ENCODE measurements at regions of chr18 and their contacts with region 1.

Region 1: DNA sequence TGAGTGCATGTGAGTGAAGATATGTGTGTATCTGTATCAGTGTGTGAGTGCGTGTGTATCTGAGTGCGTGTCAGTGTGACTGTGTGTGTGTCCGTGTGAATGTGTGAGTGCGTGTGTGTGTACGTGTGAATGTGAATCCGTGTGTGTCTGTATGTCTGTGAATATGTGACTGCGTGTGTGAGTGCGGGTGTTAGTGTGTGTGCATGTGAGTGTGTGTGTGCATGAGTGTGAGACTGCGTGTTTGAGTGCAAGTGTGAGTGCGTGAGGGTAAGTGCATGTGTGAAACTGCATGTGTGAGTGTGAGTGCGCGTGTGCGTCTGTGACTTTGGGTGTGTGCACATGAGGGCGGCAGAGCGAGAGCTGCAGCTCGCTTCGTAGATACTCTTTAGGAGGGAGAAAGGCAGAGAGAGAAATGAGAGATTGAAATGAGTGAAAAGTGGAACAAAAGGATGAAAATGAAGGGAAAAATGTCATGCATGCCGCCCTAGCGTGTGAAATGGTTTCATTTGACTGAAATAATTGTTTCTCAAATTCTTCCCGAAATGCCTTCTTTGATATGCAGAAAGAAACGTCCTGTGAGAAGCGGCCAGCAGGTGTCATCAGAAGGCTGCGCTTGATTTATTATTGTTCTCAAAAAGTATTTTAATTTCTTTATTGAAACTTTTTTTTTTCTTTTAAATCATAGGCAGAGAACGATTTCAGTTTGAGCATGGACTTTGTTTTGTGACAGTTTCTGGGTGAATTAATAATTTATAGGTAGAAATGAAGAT is 25.6 kb downstream of the ZNF407 start:
- DNase-seq: peak in 7 of 9 donors; percentile 16 to 62 (median 48)
- ATAC-seq: peak; percentile 52
- H3K4me3 ChIP-seq: no peak overlapping the region
- H3K4me3 Mint-ChIP-seq: no peak overlapping the region
- H3K27ac ChIP-seq: no peak overlapping the region
- H3K27ac Mint-ChIP-seq: no peak overlapping the region
- H3K4me1 ChIP-seq: peaks cover 3 to 9% of the 10 kb centered on the region in 2 donors
- H3K4me1 Mint-ChIP-seq: peaks cover 6 to 28% (median 13%) of the 10 kb centered on the region in 7 donors
- H3K27me3 ChIP-seq: no peaks in the 10 kb centered on the region
- H3K27me3 Mint-ChIP-seq: no peaks in the 10 kb centered on the region

Region 2: DNA sequence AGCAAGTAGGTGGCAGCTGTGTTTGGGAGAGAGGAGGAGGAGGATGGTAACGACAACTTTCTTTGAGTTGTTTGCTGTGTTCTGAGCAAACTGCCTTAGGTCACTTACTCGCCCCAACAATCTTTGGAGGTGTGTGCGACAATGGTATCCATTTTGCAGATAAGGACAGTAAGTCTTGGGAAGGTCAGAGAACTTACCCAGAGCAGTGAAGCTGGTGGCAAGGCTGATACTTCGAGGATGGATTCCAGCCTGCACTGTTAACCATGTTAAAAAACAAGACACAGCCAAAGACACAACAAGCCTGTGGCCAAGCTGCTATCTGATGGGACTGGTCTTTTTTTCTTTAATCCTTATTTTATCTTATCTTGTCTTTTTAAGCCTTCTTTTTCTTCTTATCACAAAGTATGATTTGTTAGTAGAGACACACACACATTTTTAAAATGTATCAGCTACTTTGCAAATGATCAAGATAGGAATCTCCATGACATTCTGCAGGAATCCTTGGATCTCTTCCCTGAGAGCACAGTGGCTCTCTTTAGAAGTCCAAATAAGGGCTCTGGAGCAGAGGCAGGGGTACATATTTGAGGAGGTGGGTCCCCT is 61.0 kb before region 1 on chr18:
- CTCF ChIA-PET with region 1: no interaction called
- POLR2A ChIA-PET with region 1: no interaction called
- intact Hi-C with region 1: no loop called
- DNase-seq: no peak
- ATAC-seq: no peak
- H3K4me3 ChIP-seq: no peak overlapping the region
- H3K4me3 Mint-ChIP-seq: no peak overlapping the region
- H3K27ac ChIP-seq: no peak overlapping the region
- H3K27ac Mint-ChIP-seq: peak overlapping the region in 1 of 9 donors; percentile 64
- H3K4me1 ChIP-seq: no peaks in the 10 kb centered on the region
- H3K4me1 Mint-ChIP-seq: no peaks in the 10 kb centered on the region
- H3K27me3 ChIP-seq: no peaks in the 10 kb centered on the region
- H3K27me3 Mint-ChIP-seq: peaks cover 0 to 12% (median 9%) of the 10 kb centered on the region in 5 donors

Region 3: GRCh38 chr18:74963820-74964446 is 340.7 kb after region 1 on chr18:
- CTCF ChIA-PET with region 1: interaction called, 3 read pairs
- POLR2A ChIA-PET with region 1: no interaction called
- intact Hi-C with region 1: loop called in 1 of 2 experiments (anchors 5 kb)
- DNase-seq: no peak
- ATAC-seq: peak; percentile 59
- H3K4me3 ChIP-seq: no peak overlapping the region
- H3K4me3 Mint-ChIP-seq: no peak overlapping the region
- H3K27ac ChIP-seq: no peak overlapping the region
- H3K27ac Mint-ChIP-seq: no peak overlapping the region
- H3K4me1 ChIP-seq: no peaks in the 10 kb centered on the region
- H3K4me1 Mint-ChIP-seq: peaks cover 0 to 8% (median 0%) of the 10 kb centered on the region in 7 donors
- H3K27me3 ChIP-seq: no peaks in the 10 kb centered on the region
- H3K27me3 Mint-ChIP-seq: no peaks in the 10 kb centered on the region

Region 4: DNA sequence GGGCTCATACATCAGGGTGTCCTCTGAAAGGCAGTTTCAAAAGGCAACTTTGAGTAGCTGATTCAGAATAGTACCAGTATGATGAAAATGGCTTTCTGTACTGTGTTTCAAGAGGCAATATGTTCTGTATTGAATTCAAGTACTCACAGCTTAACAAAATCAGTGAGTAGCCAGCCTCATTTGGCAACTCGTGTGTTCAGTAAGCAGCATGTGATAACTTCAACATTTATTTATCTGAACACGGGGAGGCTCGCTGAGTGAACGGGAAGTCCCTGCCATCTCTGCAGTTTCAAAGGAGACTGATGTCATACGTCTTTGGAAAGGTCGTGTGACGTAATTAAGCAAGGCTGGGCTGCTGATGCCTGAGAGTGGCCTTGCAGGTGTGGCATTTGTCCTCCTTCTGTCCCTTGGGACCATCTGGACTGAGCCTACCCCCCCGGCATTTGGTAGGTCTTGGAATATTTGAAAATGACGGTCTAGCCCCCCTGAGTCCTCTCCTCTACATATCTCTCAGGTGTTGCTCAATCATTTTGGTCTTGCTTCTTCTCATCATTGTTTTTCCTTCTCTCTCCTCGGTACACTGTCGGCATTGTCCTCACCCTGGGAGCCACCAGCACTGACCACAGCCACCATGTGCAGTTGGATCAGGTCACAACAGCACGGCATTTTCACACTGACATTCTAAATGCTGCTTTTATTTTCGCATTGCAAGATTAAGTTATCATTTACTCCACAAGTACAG is 741.5 kb after region 1 on chr18:
- CTCF ChIA-PET with region 1: interaction called, 3 read pairs
- POLR2A ChIA-PET with region 1: no interaction called
- intact Hi-C with region 1: loop called in 1 of 2 experiments (anchors 1 kb)
- DNase-seq: no peak
- ATAC-seq: no peak
- H3K4me3 ChIP-seq: no peak overlapping the region
- H3K4me3 Mint-ChIP-seq: no peak overlapping the region
- H3K27ac ChIP-seq: no peak overlapping the region
- H3K27ac Mint-ChIP-seq: peak overlapping the region in 1 of 9 donors; percentile 12
- H3K4me1 ChIP-seq: no peaks in the 10 kb centered on the region
- H3K4me1 Mint-ChIP-seq: peaks cover 0 to 1% (median 0%) of the 10 kb centered on the region in 7 donors
- H3K27me3 ChIP-seq: no peaks in the 10 kb centered on the region
- H3K27me3 Mint-ChIP-seq: peaks cover 0 to 2% (median under 1%) of the 10 kb centered on the region in 5 donors

Measured in naive thymus-derived CD4-positive, alpha-beta T cell (primary cell).